Heart left ventricle (tissue), 16 donors: ENCODE measurements at regions of chr20 and their contacts with region 1.

Region 1: GRCh38 chr20:2663887-2664719 is at the start of gene IDH3B:
- DNase-seq: peak; percentile 93 to 95 (median 93)
- ATAC-seq: peak; percentile 95 to 99 (median 98)
- H3K4me3 ChIP-seq: peak within 1 kb of the TSS; percentile 71 to 97 (median 88)
- H3K27ac ChIP-seq: peak within 1 kb of the TSS; percentile 79 to 96 (median 90)
- H3K4me1 ChIP-seq: peaks cover 0 to 17% (median 13%) of the 10 kb centered on the region in 12 donors
- H3K27me3 ChIP-seq: no peaks in the 10 kb centered on the region
- CTCF ChIP-seq: no peak
- POLR2A ChIP-seq: peak in 1 of 2 donors; percentile 80
- total RNA-seq, gene IDH3B: 122 to 356 (median 208) TPM

Region 2: DNA sequence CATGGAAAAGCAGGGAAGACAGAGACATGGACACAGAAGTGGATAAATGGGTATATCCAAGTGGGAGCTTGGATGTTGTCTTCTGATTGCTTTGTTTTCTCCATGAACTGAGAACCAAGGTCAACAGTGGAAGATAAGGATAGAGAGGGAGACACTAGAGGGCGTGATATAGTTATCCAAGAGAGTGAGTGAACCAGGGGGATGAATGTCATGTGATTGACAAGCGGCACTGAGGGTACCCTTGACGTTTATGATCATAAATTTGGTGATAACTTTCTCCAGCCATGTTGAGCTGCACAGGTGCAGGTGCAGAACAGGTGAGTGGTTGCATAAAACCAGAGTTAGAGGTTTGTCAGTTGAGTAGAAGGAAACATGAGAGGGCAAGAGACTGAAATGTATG is 49.2 kb after region 1 on chr20:
- intact Hi-C with region 1: no loop called
- DNase-seq: no peak
- ATAC-seq: no peak
- H3K4me3 ChIP-seq: no peak overlapping the region
- H3K27ac ChIP-seq: no peak overlapping the region
- H3K4me1 ChIP-seq: no peaks in the 10 kb centered on the region
- H3K27me3 ChIP-seq: no peaks in the 10 kb centered on the region
- CTCF ChIP-seq: peak in 3 of 12 donors; percentile 5 to 19 (median 8)
- POLR2A ChIP-seq: no peak

Region 3: GRCh38 chr20:2840138-2840966 is 176.2 kb after region 1 on chr20 and contains the starts of genes PCED1A and VPS16:
- intact Hi-C with region 1: loop called in 2 of 10 experiments (anchors 5 to 10 kb)
- DNase-seq: peak; percentile 89 to 95 (median 91)
- ATAC-seq: peak; percentile 97 to 99 (median 98)
- H3K4me3 ChIP-seq: peak within 1 kb of the TSS; percentile 70 to 99 (median 91)
- H3K27ac ChIP-seq: peak within 1 kb of the TSS; percentile 69 to 96 (median 87)
- H3K4me1 ChIP-seq: peaks cover 0 to 26% (median 15%) of the 10 kb centered on the region in 12 donors
- H3K27me3 ChIP-seq: no peaks in the 10 kb centered on the region
- CTCF ChIP-seq: no peak
- POLR2A ChIP-seq: peak in 1 of 2 donors; percentile 46
- total RNA-seq, gene PCED1A: 5.0 to 20.7 (median 6.8) TPM
- total RNA-seq, gene VPS16: 13.9 to 28.6 (median 19.5) TPM

Region 4: DNA sequence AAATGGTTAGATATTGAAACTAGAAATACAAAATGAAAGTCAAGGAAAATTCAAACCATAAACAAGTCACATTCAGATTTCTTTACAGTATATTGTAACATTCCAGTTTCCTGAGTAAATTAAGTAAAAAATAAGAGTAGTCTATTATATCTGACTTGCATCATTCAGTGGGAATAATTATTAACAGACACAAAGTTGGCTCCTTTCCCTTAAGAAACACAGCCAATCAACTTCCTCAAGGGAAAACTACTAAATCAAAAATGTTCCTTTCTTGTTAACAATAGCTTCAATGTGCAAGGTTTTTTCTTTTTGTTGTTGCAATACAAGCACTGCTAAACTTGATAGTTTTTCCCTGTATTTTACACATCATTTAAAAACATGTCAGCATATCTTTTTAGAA is 710.2 kb after region 1 on chr20:
- intact Hi-C with region 1: no loop called
- DNase-seq: no peak
- ATAC-seq: no peak
- H3K4me3 ChIP-seq: no peak overlapping the region
- H3K27ac ChIP-seq: peak overlapping the region in 1 of 12 donors; percentile 9
- H3K4me1 ChIP-seq: peaks cover 4 to 36% (median 16%) of the 10 kb centered on the region in 12 donors
- H3K27me3 ChIP-seq: no peaks in the 10 kb centered on the region
- CTCF ChIP-seq: no peak
- POLR2A ChIP-seq: no peak

Region 5: GRCh38 chr20:3470627-3471396 is 806.7 kb after region 1 on chr20 and contains the start of gene ATRN:
- intact Hi-C with region 1: no loop called
- DNase-seq: peak; percentile 95 to 97 (median 95)
- ATAC-seq: peak; percentile 91 to 98 (median 98)
- H3K4me3 ChIP-seq: peak within 1 kb of the TSS; percentile 83 to 100 (median 98)
- H3K27ac ChIP-seq: peak within 1 kb of the TSS; percentile 48 to 93 (median 88)
- H3K4me1 ChIP-seq: peaks cover 9 to 35% (median 27%) of the 10 kb centered on the region in 12 donors
- H3K27me3 ChIP-seq: no peaks in the 10 kb centered on the region
- CTCF ChIP-seq: no peak
- POLR2A ChIP-seq: peak; percentile 6 to 86
- total RNA-seq, gene ATRN: 30.3 to 44.7 (median 36.9) TPM